ENCODE measurements at regions of chr1 and their contacts with region 1.

Region 1: DNA sequence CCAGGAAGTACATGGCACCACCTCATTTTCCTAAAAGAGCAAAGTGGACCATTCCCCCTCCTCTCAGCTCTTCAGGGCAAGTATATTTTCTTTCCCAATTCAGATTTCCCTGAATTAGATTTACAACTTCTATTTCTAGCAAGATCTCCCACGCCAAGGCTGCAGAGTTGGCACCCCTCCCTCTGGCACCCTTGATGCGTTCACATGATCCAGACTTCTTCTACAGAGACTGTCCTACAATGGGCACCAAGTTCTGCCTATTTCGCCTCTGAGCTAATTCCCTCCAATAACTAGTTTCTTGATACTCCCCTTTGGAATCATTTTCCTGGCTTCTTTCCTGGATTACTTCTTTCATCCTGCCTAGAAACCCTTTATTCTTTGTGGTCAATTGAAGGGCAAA is 122.0 kb downstream of the CDC7 start:
- DNase-seq: no peak
- ATAC-seq: no peak
- H3K4me3 ChIP-seq: no peak overlapping the region
- H3K27ac ChIP-seq: no peak overlapping the region
- H3K4me1 ChIP-seq: peaks cover 2% of the 10 kb centered on the region; the same call in 1 of the 2 replicates
- H3K27me3 ChIP-seq: peaks cover 0 to 4% of the 10 kb centered on the region in 2 experiments; a peak in 1 of 5 replicates
- CTCF ChIP-seq: no peak
- EP300 ChIP-seq: no peak
- POLR2A ChIP-seq: no peak
- RAD21 ChIP-seq: no peak

Region 2: DNA sequence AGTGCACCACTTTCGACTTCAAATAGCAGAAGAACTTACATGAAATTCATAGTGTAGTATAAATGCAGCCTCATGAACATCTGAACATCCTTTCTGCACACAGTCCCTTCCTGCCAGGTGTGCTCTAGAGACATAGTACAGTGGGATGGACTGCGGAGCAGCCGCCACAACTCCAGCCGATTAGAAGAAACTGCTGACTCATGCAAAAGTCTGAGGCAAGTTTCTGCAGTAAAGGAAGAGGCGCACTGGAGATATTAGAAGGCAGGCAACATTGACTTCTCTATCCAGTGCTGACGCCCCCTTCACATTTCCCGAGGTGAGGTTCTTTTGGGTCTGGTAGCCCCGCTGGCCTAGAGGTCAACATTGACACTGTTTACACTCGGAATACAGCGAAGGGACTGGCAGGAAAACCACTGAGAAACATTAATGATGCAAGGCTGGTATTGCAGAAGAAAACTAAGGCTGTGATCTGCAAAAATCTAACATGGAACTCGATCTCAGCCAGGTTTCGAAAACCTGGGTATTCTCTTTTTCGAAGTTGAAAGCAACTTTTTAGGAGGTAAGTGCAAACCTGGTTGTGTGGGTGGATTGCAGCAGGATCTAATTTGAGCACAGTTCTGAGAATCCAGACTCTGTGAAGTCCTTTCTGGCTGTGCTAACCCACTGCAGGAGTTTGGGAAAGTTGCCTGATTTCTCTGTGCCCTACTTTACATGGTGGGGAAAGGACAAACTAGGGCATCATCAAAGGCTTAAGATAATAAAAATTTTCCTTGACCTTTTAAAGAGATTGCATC is 31.2 kb before region 1 on chr1:
- CTCF ChIA-PET with region 1: no interaction called
- POLR2A ChIA-PET with region 1: no interaction called
- in situ Hi-C with region 1: no loop called
- intact Hi-C with region 1: no loop called
- DNase-seq: no peak
- ATAC-seq: peak; percentile 61
- H3K4me3 ChIP-seq: 0 out of 6 replicates have a peak overlapping the region, but pooled peaks of 1 of the 3 experiments have one; percentile 11
- H3K27ac ChIP-seq: no peak overlapping the region
- H3K4me1 ChIP-seq: peaks cover 21% of the 10 kb centered on the region
- H3K27me3 ChIP-seq: peaks cover 0 to 23% of the 10 kb centered on the region in 2 experiments; a peak in 2 of 5 replicates
- CTCF ChIP-seq: no peak
- EP300 ChIP-seq: no peak
- POLR2A ChIP-seq: no peak
- RAD21 ChIP-seq: no peak

Region 3: DNA sequence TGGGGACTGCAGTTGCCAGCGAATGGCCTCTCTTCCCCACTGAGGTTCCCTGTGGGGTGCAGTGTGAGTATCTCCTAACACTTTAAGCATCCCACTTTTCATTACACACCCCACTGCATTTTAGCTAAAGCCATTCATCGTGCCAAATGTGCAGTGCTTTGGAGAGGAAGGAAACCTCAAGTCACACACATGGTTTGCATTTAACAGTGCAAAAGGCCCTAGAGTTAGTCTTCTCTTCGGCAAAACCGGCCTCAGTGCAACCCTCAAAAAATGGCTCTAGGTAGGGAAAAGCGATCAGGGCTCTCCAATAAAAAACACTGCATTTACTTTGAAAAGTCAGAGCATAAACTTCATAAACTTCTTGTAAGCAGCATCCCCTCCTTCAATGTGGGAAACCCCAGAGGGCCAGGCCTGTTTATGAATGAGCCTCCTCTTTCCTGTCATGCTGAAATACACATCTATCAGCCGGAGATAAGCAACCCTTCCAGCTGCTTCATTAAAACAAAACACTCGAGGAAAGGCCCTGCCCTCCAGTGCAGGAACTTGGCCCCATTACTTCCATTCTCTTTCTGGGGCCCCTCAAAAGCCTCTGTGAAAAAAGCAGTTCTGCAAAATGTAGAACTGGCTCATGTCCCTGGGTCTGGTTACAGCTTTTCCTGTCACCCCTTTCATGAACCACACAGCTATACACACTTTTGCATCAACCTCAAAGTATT is 62.0 kb after region 1 on chr1:
- CTCF ChIA-PET with region 1: no interaction called
- POLR2A ChIA-PET with region 1: no interaction called
- in situ Hi-C with region 1: loop called (anchors 10 kb)
- intact Hi-C with region 1: no loop called
- DNase-seq: no peak
- ATAC-seq: no peak
- H3K4me3 ChIP-seq: no peak overlapping the region
- H3K27ac ChIP-seq: no peak overlapping the region
- H3K4me1 ChIP-seq: no peaks in the 10 kb centered on the region
- H3K27me3 ChIP-seq: no peaks in the 10 kb centered on the region
- CTCF ChIP-seq: no peak
- EP300 ChIP-seq: no peak
- POLR2A ChIP-seq: no peak
- RAD21 ChIP-seq: no peak

Measured in HepG2 (cell line).